ENCODE measurements at regions of chr1 and their contacts with region 1.

Region 1: DNA sequence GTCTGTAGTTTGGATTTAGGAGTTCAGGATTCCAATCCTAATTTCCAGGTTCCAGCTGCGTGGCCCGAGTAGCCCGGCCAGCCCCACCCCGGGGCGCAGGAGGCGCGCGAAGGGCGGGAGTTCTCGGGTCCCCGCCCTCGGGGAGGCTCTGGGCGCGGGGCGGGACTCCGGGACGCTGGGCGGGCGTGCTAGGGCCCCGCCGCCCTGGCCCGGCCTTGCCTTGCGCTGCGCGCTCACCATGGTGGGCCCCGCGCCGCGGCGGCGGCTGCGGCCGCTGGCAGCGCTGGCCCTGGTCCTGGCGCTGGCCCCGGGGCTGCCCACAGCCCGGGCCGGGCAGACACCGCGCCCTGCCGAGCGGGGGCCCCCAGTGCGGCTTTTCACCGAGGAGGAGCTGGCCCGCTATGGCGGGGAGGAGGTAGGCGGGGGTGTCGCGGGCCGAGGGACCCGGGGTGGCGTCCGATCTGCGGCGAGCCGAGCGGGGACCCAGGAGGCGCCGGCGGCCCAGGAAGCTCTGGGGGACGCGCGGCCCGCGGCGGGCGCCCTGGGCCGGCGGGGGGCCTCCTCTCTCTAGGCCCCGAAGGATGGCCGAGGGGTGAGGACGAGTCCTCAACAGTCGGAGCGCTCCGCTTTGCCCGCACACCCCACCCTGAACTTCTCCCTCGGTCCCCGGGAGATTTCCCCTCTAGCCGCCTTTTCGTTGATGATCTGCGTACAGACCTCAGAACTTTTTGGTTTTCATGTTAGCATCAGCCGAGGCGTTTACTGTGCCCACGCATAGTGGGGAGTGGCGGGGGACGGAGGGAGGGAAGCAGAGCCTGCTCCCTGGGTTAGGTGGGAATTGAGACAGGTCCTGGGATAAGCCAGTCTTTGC is at the start of gene NENF:
- DNase-seq: peak; percentile 67 to 84
- ATAC-seq: peak; percentile 98 to 99 (median 98)
- H3K4me3 ChIP-seq: peak within 1 kb of the TSS; percentile 51
- H3K4me3 Mint-ChIP-seq: peak within 1 kb of the TSS; percentile 76
- H3K27ac ChIP-seq: peak within 1 kb of the TSS; percentile 18
- H3K27ac Mint-ChIP-seq: peak within 1 kb of the TSS in 1 of 2 donors; percentile 49
- H3K4me1 ChIP-seq: peaks cover 7% of the 10 kb centered on the region
- H3K4me1 Mint-ChIP-seq: peaks cover 4 to 9% of the 10 kb centered on the region in 2 donors
- H3K27me3 ChIP-seq: no peaks in the 10 kb centered on the region
- H3K27me3 Mint-ChIP-seq: peaks cover 0 to 4% of the 10 kb centered on the region in 2 donors
- CTCF ChIP-seq: no peak
- total RNA-seq, gene NENF: 7.2 to 14.0 (median 12.2) TPM

Region 2: GRCh38 chr1:212414328-212415106 is 18.4 kb before region 1 on chr1 and contains the start of gene PACC1:
- intact Hi-C with region 1: loop called (anchors 1 kb)
- DNase-seq: peak; percentile 82 to 95
- ATAC-seq: peak; percentile 92 to 98 (median 92)
- H3K4me3 ChIP-seq: peak within 1 kb of the TSS; percentile 61
- H3K4me3 Mint-ChIP-seq: peak within 1 kb of the TSS; percentile 99
- H3K27ac ChIP-seq: peak within 1 kb of the TSS; percentile 71
- H3K27ac Mint-ChIP-seq: peak within 1 kb of the TSS; percentile 91 to 96
- H3K4me1 ChIP-seq: peaks cover 27% of the 10 kb centered on the region
- H3K4me1 Mint-ChIP-seq: peaks cover 39 to 53% of the 10 kb centered on the region in 2 donors
- H3K27me3 ChIP-seq: no peaks in the 10 kb centered on the region
- H3K27me3 Mint-ChIP-seq: no peaks in the 10 kb centered on the region
- CTCF ChIP-seq: no peak
- total RNA-seq, gene PACC1: 5.0 to 14.2 (median 11.4) TPM

Region 3: DNA sequence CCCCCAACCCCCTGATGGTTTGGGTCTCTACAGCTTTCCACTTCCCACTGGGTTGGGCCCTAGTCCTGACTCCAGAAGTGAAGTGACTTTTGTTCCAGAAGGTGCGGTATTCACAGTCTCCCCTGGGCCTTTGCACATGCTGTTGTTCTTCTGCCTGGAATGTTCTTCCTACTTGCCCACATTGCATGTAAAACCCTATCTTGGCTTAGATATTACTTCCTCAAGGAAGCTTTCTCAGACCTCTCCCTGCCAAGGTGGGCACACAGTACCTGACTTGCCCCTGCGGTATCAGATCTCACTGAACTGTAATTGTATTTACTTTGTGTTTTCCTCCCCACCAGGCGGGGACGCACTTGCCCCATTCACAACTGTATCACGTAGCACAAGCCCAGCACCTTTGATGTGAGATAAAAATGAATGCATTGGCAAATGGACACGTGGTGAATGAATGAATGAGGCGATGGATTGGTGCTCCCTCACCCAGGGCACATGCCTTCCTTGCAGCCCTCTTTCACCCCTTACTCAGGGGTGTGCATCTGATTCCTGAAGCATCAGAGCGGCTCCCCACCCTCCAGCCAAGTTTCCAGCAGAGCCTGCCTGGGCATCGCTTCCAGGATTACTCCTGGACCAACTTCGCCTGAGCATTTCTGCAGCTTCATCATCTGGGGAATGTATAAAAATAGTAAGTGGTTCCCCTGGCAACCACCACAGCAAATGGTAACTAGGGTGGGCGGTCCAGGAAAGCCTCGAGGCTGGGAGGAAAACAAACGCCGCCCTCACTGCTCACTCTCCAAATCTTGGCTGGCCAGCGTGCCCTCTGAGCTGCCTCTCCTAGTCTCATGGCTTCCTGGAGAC is 19.6 kb after region 1 on chr1:
- intact Hi-C with region 1: no loop called
- DNase-seq: no peak
- ATAC-seq: no peak
- H3K4me3 ChIP-seq: no peak overlapping the region
- H3K4me3 Mint-ChIP-seq: no peak overlapping the region
- H3K27ac ChIP-seq: no peak overlapping the region
- H3K27ac Mint-ChIP-seq: no peak overlapping the region
- H3K4me1 ChIP-seq: peaks cover 3% of the 10 kb centered on the region
- H3K4me1 Mint-ChIP-seq: peaks cover 0 to under 1% of the 10 kb centered on the region in 2 donors
- H3K27me3 ChIP-seq: no peaks in the 10 kb centered on the region
- H3K27me3 Mint-ChIP-seq: no peaks in the 10 kb centered on the region
- CTCF ChIP-seq: no peak